Posterior cingulate gyrus (tissue), 11 donors: ENCODE measurements at regions of chr12 and their contacts with region 1.

Region 1: GRCh38 chr12:93569656-93570551 is 2.6 kb upstream of the SOCS2 start:
- DNase-seq: peak; percentile 68 to 95 (median 78)

Region 2: DNA sequence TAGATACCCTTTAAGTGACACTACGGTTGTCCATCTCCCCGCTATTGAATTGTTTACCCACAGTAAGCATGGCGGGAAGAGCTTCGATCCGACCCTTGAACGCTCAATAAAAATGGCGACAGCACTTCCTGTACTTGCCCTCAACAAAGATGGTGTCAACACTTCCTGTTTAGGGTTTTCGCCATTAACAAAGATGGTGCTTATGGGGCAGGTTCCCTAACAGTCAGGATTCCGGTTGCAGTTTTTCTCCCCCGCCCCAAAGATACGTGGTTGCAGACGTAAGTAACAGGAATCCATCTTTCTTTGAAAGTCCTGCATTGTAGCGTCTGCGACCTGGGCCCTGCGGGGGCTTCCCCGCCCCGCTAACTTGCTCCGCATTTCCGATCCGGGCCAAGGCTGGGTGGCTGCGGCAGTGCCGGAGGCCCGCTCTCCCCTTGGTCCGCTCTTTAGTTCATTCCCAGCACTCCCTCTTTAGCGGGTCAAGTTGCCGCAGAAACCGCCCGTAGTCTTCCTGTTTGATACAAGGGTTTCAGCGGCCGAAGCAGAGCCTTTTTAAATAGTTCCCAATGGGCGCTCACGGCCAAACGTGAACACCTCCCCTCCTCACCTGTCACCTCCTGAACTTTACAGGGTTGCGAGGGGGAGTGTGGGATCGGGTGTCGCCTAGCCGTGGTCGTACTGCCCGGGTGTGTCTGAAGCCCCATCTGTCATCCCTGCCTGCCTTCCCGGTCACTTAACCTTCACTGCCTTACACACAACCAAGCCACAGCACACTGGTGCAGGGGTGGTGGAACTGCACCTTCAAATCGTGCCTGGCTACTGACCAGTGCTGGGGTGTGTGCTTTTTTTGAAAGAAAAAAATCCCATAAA is 107.5 kb after region 1 on chr12 and contains the start of gene CRADD:
- intact Hi-C with region 1: loop called (anchors 2 kb)
- DNase-seq: peak; percentile 54 to 95 (median 70)

Region 3: GRCh38 chr12:93742110-93742934 is 172.4 kb after region 1 on chr12:
- intact Hi-C with region 1: loop called (anchors 5 kb)
- DNase-seq: peak; percentile 56 to 95 (median 74)

Region 4: GRCh38 chr12:93954166-93955112 is 384.5 kb after region 1 on chr12:
- intact Hi-C with region 1: no loop called
- DNase-seq: no peak

Region 5: GRCh38 chr12:93979189-93979588 is 409.3 kb after region 1 on chr12:
- intact Hi-C with region 1: loop called (anchors 10 kb)
- DNase-seq: no peak